Panc1 (cell line): ENCODE measurements at regions of chr15 and their contacts with region 1.

Region 1: DNA sequence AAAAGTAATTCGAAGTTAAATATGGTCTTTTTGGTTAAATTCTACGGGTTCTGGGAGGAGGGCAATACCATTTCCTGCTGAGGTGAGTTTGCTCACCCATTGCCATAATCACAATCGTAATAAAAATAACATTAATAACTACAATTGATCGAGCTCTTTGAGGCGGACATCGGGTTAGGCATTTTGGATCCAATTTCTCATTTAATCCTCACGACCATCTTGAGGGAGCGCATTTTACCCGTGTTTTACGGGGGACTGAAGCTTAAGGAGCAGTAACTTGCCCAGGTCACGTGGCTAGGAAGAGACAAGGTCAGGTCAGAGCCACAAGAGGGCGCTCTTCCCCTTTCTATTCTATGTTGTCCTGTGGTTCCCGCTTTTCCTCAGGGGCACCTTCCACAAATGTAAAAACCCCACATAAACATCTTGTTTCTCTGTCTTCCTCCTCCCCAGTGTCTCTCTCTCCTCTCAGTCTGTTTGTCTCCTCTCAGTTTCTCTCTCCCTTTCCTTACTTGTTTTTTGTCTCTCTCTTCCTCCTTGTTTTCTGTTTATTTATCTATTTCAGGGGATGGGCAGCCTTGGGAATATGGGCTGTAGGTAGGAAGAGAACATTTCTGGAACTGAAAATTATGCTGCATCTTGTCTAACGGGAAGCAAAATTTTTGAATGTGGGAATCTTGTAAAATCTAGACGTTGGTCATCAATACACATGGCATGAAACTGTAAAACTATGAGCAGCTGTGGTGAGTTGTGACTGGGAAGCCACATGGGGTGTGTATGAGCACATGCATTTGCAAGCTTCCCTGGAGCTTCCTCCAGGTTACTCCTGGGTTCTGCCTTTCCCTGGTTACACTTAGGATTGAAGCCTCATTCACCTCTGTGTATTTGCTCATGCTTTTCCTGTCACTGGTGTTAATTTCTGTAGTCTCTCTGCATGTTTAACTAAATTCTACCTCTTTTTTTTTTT is 71.0 kb downstream of the SQOR start:
- DNase-seq: peak; percentile 86
- ATAC-seq: peak; percentile 83
- H3K4me3 ChIP-seq: peak overlapping the region; percentile 78 to 94
- H3K27ac ChIP-seq: peak overlapping the region; percentile 95
- H3K4me1 ChIP-seq: no peaks in the 10 kb centered on the region
- H3K27me3 ChIP-seq: no peaks in the 10 kb centered on the region
- CTCF ChIP-seq: peak; percentile 91

Region 2: DNA sequence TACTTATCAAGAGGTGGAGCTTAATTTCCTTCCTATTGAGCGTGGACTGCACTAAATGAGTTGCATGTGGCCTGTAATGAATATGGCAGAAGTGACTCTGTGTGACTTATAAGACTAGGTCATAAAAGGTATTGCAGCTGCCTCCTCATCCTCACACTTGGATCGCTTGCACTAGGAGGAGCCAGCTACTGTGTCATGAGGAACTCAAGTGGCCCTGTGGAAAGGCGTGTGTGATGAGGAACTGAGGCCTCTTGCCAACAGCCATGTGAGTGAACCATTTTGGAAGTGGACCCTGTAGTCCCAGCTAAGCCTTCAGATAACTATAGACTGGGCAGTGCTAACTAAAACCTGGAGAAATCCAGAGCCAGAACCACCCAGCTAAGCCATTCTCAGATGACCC is 176.2 kb before region 1 on chr15:
- CTCF ChIA-PET with region 1: no interaction called
- POLR2A ChIA-PET with region 1: no interaction called
- in situ Hi-C with region 1: no loop called
- intact Hi-C with region 1: no loop called
- DNase-seq: no peak
- ATAC-seq: no peak
- H3K4me3 ChIP-seq: no peak overlapping the region
- H3K27ac ChIP-seq: no peak overlapping the region
- H3K4me1 ChIP-seq: no peaks in the 10 kb centered on the region
- H3K27me3 ChIP-seq: no peaks in the 10 kb centered on the region
- CTCF ChIP-seq: no peak

Region 3: DNA sequence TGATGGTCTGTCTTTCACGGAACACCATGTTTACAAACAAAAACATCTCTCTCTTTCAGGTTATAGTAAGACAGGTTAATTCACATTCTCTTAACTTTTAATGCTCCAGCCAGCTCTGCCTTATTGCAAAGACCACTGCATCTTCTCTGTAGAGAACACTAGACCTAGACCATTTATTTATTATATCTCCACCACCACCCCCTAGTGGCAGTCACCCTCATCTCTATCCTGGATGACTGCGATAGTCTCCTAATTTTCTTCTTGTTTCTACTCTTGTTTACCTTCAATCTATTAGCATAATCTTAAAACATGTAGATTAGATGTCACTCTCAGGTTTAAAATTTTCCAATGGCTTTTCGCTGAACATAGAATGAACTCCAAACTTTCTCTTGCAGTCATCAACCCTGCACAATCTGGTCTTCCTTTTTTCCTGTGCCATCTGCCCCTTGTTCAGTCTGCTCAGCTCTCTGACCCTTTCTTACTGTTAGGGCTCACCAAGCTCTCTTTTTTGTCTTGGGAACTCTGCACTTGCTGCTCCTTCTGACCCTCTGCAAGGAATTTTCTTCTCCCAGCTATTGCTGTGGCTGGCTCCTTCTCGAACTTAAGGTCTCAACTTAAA is 84.6 kb after region 1 on chr15:
- CTCF ChIA-PET with region 1: interaction called, 6 read pairs
- POLR2A ChIA-PET with region 1: no interaction called
- in situ Hi-C with region 1: no loop called
- intact Hi-C with region 1: loop called (anchors 2 kb)
- DNase-seq: peak; percentile 17
- ATAC-seq: peak; percentile 92
- H3K4me3 ChIP-seq: no peak overlapping the region
- H3K27ac ChIP-seq: no peak overlapping the region
- H3K4me1 ChIP-seq: no peaks in the 10 kb centered on the region
- H3K27me3 ChIP-seq: no peaks in the 10 kb centered on the region
- CTCF ChIP-seq: peak; percentile 74

Region 4: DNA sequence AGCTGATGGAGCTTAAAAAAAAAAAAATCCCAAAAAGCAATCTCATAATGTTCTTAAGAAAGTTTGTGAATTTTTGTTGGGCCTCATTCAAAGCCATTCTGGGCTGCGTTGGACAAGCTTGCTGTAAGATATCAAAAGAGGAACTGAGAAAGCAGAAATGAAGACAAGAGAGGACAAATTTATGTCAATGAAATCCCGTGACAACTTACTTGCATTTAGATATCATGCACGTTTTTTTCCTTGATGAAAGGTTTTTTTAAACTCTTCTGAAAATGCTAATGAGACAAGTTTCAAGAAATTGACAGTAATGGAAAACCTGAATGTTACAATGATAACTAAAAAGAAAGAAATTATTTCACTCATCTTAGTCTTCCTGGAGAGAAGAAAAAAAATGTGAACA is 592.0 kb after region 1 on chr15:
- CTCF ChIA-PET with region 1: no interaction called
- POLR2A ChIA-PET with region 1: no interaction called
- in situ Hi-C with region 1: loop called (anchors 10 kb)
- intact Hi-C with region 1: no loop called
- DNase-seq: no peak
- ATAC-seq: no peak
- H3K4me3 ChIP-seq: no peak overlapping the region
- H3K27ac ChIP-seq: no peak overlapping the region
- H3K4me1 ChIP-seq: no peaks in the 10 kb centered on the region
- H3K27me3 ChIP-seq: no peaks in the 10 kb centered on the region
- CTCF ChIP-seq: no peak